ENCODE measurements at regions of chr14 and their contacts with region 1.

Region 1: GRCh38 chr14:23555882-23556699 is at the start of gene THTPA:
- DNase-seq: peak; percentile 91
- H3K4me3 ChIP-seq: peak within 1 kb of the TSS; percentile 63 to 83 (median 79)
- H3K27ac ChIP-seq: peak within 1 kb of the TSS; percentile 52
- H3K4me1 ChIP-seq: peaks cover 14% of the 10 kb centered on the region
- H3K27me3 ChIP-seq: no peaks in the 10 kb centered on the region
- CTCF ChIP-seq: no peak
- POLR2A ChIP-seq: peak; percentile 74
- total RNA-seq, gene THTPA: 9.8 and 12.5 TPM in 2 replicates

Region 2: DNA sequence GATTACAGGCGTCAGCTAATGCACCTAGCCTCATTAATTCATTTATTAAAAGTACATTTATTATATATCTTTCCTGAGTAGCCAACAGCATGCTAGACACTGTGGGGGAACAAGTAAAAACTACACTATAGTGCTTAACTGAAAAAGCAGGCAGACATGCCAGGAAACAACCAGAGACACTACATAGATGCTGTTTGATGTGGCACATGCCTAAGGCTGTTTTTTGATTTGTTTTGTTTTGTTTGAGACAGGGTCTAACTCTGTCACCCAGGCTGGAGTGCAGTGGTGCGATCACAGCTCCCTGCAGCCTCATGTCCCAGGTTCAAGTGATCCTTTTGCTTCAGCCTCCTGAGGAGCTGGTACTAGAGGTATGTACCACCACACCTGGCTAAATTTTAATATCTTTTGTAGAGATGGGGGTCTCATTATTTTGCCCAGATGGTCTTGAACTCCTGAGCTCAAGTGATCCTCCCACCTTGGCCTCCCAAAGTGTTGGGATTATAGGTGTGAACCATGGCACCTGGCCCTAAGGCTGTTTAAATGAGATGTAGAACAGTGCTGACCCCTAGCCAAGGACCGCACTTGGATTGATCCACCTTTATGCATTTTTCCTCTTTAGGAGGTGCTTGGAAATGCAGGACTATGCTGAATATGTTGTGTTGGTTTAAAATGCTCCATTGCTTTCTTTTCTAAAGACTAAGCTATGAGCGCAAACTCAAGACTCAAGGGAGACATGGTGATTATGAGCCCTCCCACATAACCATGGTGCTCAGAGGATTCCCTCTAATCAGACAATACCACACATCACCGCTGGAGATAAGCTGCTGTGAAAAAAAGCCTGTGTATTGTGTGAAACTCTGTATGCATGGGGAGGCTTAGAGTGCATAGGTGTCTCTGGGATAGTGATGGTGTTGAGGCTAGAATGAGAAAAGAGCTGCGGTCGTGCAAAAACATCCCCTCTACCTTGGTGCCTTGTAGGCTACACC is 535.7 kb before region 1 on chr14:
- CTCF ChIA-PET with region 1: no interaction called
- POLR2A ChIA-PET with region 1: no interaction called
- dilution Hi-C with region 1: no loop called
- intact Hi-C with region 1: no loop called
- DNase-seq: no peak
- H3K4me3 ChIP-seq: no peak overlapping the region
- H3K27ac ChIP-seq: no peak overlapping the region
- H3K4me1 ChIP-seq: no peaks in the 10 kb centered on the region
- H3K27me3 ChIP-seq: no peaks in the 10 kb centered on the region
- CTCF ChIP-seq: no peak
- POLR2A ChIP-seq: no peak

Region 3: DNA sequence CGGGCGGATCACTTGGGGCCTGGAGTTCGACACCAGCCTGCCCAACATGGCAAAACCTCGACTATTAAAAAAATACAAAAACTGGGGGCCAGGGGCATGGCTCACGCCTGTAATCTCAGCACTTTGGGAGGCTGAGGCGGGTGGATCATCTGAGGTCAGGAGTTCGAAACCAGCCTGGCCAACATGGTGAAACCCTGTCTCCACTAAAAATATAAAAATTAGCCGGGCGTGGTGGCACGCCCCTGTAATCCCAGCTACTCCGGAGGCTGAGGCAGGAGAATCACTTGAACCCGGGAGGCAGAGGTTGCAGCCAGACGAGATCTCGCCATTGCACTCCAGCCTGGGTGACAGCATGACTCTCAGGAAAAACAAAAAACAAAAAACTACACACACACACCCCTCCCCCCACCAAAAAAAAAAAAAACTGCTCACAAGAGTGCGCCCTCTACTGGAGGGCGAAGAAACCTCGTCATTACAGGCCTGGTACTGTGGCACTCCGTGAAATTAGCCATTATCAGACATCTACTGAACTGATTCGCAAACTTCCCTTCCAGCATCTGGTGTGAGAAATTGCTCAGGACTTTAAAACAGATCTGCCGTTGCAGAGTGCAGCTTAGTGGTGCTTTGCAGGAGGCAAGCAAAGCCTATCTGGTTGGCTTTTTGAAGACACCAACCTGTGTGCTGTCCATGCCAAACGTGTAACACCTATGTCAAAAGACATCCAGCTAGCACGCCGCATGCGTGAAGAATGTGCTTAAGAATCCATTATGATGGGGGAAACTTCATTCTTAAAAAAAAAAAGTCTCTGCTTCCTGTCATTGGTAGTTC is 261.1 kb before region 1 on chr14:
- CTCF ChIA-PET with region 1: no interaction called
- POLR2A ChIA-PET with region 1: no interaction called
- dilution Hi-C with region 1: no loop called
- intact Hi-C with region 1: no loop called
- DNase-seq: peak; percentile 55
- H3K4me3 ChIP-seq: no peak overlapping the region
- H3K27ac ChIP-seq: no peak overlapping the region
- H3K4me1 ChIP-seq: peaks cover under 1% of the 10 kb centered on the region
- H3K27me3 ChIP-seq: peaks cover 6% of the 10 kb centered on the region in 2 experiments
- CTCF ChIP-seq: peak; percentile 85 to 87
- POLR2A ChIP-seq: no peak

Region 4: DNA sequence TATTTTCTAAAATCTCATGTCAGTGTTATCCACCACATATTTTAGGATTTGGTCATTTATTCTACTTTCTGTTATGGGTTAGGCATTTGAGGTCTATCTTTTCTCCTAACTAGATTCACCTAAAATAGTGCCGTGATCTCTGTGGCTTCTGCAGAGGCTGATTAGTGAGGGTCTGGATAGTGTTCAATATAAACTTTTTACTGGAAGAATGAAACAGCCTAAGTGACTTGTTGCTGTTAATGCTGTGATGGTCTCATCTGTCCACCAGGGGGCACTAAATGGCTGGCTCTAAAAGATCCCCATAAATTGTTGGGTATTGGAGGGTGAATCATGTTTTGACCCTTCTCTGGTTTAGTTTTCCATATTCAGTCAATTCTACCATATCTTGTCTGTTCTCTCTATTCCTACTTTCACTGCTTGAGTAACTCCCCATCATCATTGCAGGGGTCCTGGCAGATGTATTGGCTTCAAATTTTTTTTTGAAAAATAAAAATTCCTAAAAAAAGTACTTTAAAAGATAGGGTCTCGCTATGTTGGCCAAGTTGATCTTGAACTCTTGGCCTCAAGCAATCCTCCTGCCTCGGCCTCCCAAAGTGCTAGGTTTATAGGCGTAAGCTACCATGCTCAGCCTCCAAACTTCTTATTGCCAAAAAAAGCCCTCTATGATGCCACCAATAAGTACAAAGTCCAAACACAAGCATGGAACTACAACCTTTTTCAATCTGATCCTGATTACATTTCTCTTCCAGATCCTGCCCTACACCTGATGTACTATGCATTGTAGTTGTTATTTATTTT is 227.9 kb before region 1 on chr14:
- CTCF ChIA-PET with region 1: interaction called, 11 read pairs
- POLR2A ChIA-PET with region 1: interaction called, 3 read pairs
- dilution Hi-C with region 1: no loop called
- intact Hi-C with region 1: no loop called
- DNase-seq: peak; percentile 70
- H3K4me3 ChIP-seq: no peak overlapping the region
- H3K27ac ChIP-seq: no peak overlapping the region
- H3K4me1 ChIP-seq: peaks cover 4% of the 10 kb centered on the region
- H3K27me3 ChIP-seq: no peaks in the 10 kb centered on the region
- CTCF ChIP-seq: peak; percentile 74 to 81
- POLR2A ChIP-seq: peak; percentile 19

Region 5: DNA sequence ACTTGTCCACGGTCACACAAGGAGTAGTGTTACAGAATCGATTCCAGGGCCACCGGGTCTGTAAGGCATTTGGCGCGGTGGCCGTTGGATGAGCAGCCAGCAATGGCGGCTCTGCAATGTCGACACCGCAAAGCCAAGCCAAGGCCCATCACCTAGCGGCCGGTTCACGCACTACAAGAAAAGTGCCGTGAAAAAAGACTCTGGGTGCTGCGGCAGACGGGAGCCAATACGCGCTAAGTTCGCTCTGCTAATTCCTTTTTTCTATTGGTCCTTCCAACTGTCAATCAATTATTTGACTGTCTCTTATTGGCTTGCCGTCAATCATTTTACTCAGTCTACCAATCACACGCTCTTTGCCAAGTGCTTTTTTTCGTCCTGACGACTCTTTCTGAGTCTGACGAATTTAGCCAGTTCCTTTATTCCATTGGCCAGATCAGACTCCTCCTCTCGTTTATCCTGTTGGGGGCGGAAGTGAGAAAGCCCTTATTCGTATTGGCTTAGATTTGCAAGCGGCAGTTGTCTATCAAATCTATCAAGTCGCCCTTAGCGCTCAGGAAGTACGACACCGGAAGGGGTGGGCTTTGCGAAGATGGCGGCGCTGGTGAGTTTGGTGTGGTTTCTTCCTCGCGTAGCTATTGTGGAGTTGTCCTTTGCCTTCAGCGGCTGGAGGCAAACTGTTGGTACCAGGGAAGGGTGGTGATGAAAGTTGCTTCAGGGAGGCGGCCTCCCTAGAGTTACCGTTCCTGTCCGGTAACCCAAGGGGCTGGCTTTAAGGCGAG is 86.8 kb before region 1 on chr14 and contains the start of gene NGDN:
- CTCF ChIA-PET with region 1: interaction called, 416 read pairs
- POLR2A ChIA-PET with region 1: no interaction called
- dilution Hi-C with region 1: no loop called
- intact Hi-C with region 1: loop called (anchors 1 kb)
- DNase-seq: peak; percentile 100
- H3K4me3 ChIP-seq: peak within 1 kb of the TSS; percentile 73 to 91 (median 83)
- H3K27ac ChIP-seq: peak within 1 kb of the TSS; percentile 78
- H3K4me1 ChIP-seq: peaks cover 5% of the 10 kb centered on the region
- H3K27me3 ChIP-seq: no peaks in the 10 kb centered on the region
- CTCF ChIP-seq: peak; percentile 79 to 83
- POLR2A ChIP-seq: peak; percentile 52
- total RNA-seq, gene NGDN: 36.3 and 36.5 TPM in 2 replicates

Region 6: GRCh38 chr14:23528555-23528954 is 27.5 kb before region 1 on chr14:
- CTCF ChIA-PET with region 1: interaction called, 13 read pairs
- POLR2A ChIA-PET with region 1: no interaction called
- dilution Hi-C with region 1: no loop called
- intact Hi-C with region 1: no loop called
- DNase-seq: no peak
- H3K4me3 ChIP-seq: no peak overlapping the region
- H3K27ac ChIP-seq: no peak overlapping the region
- H3K4me1 ChIP-seq: no peaks in the 10 kb centered on the region
- H3K27me3 ChIP-seq: no peaks in the 10 kb centered on the region
- CTCF ChIP-seq: peak in 1 of 2 donors; percentile 5
- POLR2A ChIP-seq: no peak

Region 7: DNA sequence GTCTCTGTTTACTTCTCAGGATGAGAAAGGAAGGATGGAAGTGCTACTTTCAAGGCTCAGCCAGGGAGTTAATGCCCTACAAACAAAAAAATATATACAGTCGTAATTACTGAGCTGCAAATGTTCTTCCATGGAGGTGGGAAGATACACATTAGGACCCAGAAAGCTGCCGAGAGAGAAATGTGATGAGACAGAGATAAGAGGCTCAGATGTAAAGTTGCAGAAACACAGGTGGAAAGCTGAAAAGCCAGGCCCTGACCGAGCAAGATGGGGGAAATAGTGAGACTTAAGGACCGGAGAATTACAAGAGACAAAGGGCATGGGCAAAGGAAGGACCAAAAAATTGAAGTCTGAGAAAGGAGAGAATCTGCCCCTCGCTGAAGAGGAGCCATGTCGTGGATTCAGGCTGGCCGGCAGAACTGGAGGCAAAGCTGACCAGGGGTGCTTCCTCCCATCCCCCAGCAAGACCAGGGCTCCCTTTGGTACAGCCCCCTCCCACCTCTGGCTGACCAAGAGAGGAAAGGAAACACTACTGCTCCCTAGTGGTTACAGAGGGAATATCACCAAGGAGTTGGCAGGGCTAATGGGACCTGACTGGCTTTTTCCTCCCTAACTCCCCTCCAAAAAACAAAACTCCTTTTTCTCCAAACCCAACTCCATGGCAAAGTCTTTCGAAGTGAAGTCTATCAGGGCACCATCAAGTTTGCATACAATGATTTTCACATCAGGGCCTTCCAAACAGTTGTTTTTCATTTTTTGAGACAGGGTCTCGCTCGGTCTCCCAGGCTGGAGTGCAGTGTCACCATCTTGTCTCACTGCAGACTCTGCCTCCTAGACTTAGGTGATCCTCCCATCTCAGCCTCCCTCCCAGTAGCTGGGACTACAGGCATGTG is 16.6 kb before region 1 on chr14:
- CTCF ChIA-PET with region 1: interaction called, 12 read pairs
- POLR2A ChIA-PET with region 1: no interaction called
- dilution Hi-C with region 1: no loop called
- intact Hi-C with region 1: no loop called
- DNase-seq: peak; percentile 45
- H3K4me3 ChIP-seq: no peak overlapping the region
- H3K27ac ChIP-seq: no peak overlapping the region
- H3K4me1 ChIP-seq: no peaks in the 10 kb centered on the region
- H3K27me3 ChIP-seq: no peaks in the 10 kb centered on the region
- CTCF ChIP-seq: peak; percentile 66 to 78
- POLR2A ChIP-seq: no peak

Region 8: DNA sequence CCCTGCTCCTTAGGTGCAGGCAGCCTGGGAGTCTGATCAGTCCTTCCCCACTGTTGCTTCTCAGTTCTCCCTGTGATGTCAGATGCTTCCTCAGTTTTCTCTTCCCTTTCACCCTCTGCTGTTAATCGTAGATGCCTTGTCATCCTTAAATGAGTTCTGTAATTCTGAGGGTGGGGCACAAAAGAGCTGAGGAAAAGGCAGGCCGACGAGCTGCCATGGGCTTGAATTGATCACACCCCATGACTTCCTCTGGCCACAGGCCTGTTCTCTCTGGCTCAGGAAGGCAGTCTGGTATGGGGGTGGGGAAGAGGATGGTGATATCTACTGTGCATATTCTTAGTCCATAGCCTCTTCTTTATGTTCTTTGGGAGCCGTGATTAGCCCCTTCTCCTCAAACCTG is 16.7 kb after region 1 on chr14:
- CTCF ChIA-PET with region 1: interaction called, 12 read pairs
- POLR2A ChIA-PET with region 1: no interaction called
- dilution Hi-C with region 1: no loop called
- intact Hi-C with region 1: no loop called
- DNase-seq: no peak
- H3K4me3 ChIP-seq: no peak overlapping the region
- H3K27ac ChIP-seq: no peak overlapping the region
- H3K4me1 ChIP-seq: no peaks in the 10 kb centered on the region
- H3K27me3 ChIP-seq: peaks cover 26 to 38% of the 10 kb centered on the region in 2 experiments
- CTCF ChIP-seq: no peak
- POLR2A ChIP-seq: no peak

Region 9: DNA sequence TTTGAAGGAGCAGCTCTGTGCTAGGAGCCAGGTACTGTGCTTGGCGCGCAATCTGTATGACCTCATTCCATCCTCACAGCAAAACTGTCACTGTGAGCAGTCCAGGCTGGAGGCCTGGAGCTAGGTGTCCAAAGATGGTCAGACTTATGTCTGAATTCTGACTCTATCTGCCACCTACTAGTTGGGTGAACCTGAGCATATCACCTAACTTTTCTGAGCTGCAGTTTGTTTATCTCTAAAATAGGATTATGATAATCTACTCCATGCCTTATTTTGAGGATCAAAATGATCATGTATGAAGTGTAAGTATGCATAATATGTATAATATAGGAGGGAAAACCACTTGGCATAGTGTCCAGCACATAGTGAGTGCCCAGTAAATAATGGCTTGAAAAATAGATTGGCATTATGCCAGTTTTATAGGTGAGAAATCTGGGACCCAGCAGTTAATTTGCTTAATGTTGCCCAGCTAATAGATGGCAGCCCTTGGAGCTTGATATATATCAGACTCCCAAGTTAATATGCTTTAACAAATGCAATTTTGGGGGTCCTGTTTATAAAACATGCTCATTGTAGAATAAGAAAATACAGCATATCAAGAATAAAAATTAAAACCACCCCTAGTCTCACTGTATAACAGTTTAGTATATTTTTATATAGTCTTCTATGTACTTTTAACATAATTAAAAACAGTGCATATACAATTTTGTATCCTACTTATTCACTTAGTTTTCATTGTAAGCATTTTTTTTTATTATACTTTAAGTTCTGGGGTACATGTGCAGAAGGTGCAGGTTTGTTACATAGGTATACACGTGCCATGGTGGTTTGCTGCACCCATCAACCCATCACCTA is 27.0 kb after region 1 on chr14:
- CTCF ChIA-PET with region 1: no interaction called
- POLR2A ChIA-PET with region 1: no interaction called
- dilution Hi-C with region 1: no loop called
- intact Hi-C with region 1: no loop called
- DNase-seq: no peak
- H3K4me3 ChIP-seq: no peak overlapping the region
- H3K27ac ChIP-seq: no peak overlapping the region
- H3K4me1 ChIP-seq: no peaks in the 10 kb centered on the region
- H3K27me3 ChIP-seq: peaks cover 16 to 17% of the 10 kb centered on the region in 2 experiments
- CTCF ChIP-seq: no peak
- POLR2A ChIP-seq: no peak